ENCODE measurements at regions of chr22 and their contacts with region 1.

Region 1: GRCh38 chr22:32644252-32645100 is 157.0 kb upstream of the TIMP3 start:
- DNase-seq: peak; percentile 76 to 93
- H3K4me3 ChIP-seq: peak overlapping the region in 1 of 3 donors; percentile 24
- H3K27ac ChIP-seq: peak overlapping the region; percentile 81 to 88
- H3K4me1 ChIP-seq: no peaks in the 10 kb centered on the region
- H3K27me3 ChIP-seq: no peaks in the 10 kb centered on the region
- CTCF ChIP-seq: no peak
- POLR2A ChIP-seq: no peak

Region 2: DNA sequence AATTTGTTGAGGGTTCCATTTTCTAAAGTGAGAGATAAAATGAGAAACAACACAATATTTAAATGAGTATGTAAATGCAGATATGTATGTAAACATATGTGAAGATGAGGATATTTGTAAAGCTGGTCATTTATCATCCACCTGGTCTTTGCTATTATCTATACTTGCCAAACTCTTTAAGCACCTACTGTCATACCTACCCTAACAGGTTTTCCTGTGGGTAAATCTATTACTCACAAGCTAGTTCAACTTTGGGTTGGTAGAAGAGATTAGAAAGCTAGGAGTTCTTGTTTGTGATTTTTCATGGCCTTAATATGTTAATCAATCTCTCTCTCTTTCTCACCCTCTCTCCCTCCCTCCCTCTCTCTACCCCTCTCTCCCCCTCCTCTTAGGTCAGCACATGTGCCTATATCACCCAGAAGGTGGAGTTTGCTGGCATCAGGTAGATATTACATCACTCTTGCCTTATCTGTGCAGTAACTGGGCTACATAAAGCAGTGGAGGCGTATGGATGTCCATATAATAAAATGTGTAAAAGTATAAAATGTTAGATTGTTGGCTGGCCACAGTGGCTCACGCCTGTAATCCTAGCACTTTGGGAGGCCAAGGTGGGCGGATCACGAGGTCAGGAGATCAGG is 875.9 kb before region 1 on chr22:
- intact Hi-C with region 1: no loop called
- DNase-seq: no peak
- H3K4me3 ChIP-seq: no peak overlapping the region
- H3K27ac ChIP-seq: no peak overlapping the region
- H3K4me1 ChIP-seq: no peaks in the 10 kb centered on the region
- H3K27me3 ChIP-seq: no peaks in the 10 kb centered on the region
- CTCF ChIP-seq: no peak
- POLR2A ChIP-seq: no peak

Region 3: GRCh38 chr22:32579509-32580234 is 64.8 kb before region 1 on chr22:
- intact Hi-C with region 1: loop called (anchors 2 kb)
- DNase-seq: no peak
- H3K4me3 ChIP-seq: no peak overlapping the region
- H3K27ac ChIP-seq: peak overlapping the region; percentile 11 to 52
- H3K4me1 ChIP-seq: peaks cover 0 to 5% of the 10 kb centered on the region in 2 donors
- H3K27me3 ChIP-seq: no peaks in the 10 kb centered on the region
- CTCF ChIP-seq: no peak
- POLR2A ChIP-seq: no peak